Heart left ventricle (tissue), 16 donors: ENCODE measurements at regions of chr9 and their contacts with region 1.

Region 1: DNA sequence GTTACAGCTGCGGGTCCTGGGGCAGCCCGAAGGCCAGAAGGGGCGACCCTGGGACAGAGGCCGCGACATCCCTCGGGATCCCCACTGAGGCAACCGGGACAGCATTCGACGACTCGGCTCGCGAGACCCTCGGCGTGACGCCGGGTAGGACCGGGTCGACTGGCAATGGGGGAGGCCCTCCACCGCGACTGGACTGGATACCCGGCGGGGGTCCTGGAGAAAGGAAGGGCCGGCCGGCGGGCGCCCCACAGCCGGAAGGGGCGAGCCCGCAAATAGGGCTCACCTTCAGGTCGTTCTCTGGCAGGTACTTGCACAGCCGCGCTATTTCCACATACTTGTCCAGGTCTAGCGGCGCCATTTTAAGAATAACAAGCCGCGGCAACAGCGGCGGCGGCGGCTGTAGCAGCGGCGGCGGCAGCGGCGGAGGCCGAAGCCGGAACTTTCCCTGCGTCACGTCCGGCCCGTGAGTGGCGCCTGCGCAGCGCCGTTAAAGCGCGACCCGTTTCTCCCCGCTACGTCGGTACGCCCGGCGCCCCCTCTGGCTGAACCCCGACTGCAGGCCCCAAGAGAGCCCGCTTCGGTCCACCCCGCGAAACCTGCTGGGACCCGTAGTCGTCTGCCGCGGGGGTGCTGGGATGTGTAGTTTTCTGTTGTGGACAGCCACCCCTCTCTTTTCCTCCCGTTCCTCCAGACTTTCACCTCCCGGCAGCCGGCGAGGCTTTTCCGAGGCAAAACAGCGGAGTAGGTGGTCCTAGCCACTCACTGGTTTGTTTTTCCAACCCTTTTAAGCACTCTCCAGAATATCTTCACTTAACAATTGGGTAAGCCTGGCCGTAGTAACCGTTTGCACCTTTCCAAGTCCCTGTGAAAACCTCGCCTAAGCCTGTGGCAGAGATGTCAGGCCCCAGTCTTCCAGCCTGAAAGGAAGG is at the start of gene PPP6C:
- DNase-seq: peak; percentile 98 to 99 (median 98)
- ATAC-seq: peak; percentile 98 to 99 (median 99)
- H3K4me3 ChIP-seq: peak within 1 kb of the TSS; percentile 60 to 100 (median 99)
- H3K27ac ChIP-seq: peak within 1 kb of the TSS; percentile 71 to 97 (median 93)
- H3K4me1 ChIP-seq: peaks cover 0 to 49% (median 35%) of the 10 kb centered on the region in 12 donors
- H3K27me3 ChIP-seq: no peaks in the 10 kb centered on the region
- CTCF ChIP-seq: peak; percentile 53 to 86 (median 64)
- POLR2A ChIP-seq: peak; percentile 8 to 81
- total RNA-seq, gene PPP6C: 26.6 to 40.7 (median 37.7) TPM

Region 2: DNA sequence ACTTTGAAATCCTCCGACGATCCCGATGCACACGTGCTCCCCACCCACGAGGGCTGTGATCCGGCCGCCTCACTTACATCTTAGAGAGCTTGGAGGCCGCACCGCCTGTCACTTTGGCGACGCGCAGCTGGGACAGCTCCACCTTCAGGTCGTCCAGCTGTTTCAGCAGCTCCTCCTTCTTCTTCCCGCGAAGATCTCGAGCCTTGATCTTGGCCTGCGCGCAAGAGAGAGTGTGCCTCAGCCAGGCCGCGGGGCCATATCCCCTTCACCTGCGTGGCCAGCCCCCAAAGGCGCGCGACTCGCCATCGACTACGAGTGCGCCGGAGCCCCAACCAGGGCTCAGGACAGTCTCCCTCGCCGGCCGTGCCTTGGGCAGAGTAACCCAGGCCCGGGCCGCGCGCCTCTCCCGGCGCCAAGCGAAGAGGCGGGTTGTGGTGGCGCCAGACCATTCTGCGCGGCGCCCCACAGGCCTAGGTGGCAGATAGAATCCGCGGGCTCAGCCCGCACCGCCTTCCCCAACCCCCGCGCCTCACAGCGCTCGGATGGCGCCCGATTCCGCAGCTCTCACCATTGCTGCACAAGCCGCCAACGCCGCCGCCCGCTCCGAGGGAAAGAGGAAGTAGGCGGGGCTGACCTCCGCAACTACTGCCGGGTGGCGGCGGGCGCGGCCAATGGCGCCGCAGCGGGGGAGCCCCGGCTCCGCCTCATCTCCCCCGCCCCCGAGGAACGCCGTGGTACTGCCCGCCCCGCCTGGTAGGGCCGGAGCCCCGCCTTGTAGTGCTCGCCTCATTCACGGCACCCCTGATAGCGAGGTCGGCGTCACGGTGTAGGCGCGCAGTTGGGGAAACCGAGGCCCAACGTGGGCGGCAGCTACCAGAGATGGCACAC is 328.0 kb before region 1 on chr9 and contains the starts of genes ARPC5L and RPL35:
- intact Hi-C with region 1: loop called in 1 of 10 experiments (anchors 10 kb)
- DNase-seq: peak; percentile 96 to 98 (median 96)
- ATAC-seq: peak; percentile 95 to 97 (median 96)
- H3K4me3 ChIP-seq: peak within 1 kb of the TSS; percentile 71 to 98 (median 84)
- H3K27ac ChIP-seq: peak within 1 kb of the TSS; percentile 81 to 95 (median 92)
- H3K4me1 ChIP-seq: peaks cover 0 to 42% (median 32%) of the 10 kb centered on the region in 12 donors
- H3K27me3 ChIP-seq: no peaks in the 10 kb centered on the region
- CTCF ChIP-seq: peak in 7 of 12 donors; percentile 10 to 45 (median 23)
- POLR2A ChIP-seq: peak in 1 of 2 donors; percentile 93
- total RNA-seq, gene ARPC5L: 27.0 to 56.7 (median 38.3) TPM
- total RNA-seq, gene RPL35: 600 to 1,072 (median 736) TPM

Region 3: DNA sequence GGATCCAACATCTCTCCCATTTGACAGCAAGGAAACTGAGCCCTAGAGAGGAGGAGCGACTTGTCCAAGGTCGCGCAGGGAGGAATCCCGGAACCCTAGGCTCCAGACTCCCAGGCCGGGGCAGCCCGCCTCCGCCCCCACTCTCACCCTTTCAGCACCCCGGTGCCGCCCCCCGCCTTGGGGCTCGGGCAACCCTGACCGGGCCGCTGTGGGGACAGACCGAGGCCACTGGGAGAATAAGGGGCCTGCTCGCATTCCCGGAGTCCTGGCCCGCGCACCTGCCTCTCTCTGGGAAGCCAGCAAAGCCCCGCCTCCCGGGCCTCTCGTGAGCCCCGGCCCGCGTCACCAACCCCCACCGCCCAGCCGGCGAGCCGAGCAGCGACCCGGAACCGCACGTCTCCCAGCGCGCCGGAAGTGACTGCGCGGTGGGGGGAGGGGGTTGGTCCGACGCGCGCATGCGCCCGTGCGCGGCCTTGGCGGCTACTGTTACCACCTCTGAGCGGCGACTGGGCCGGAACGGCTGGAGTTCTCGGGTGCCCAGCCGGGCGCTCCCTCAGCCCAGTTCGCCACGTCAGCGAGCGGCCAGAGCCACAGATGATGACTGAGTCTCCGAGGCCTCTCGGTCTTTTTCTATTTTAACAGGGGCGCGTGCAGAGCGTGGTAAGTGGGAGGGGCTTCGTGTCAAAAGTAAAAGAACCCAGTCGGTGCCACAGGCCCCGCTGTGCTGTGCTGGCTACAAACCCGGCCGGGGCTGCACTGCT is 248.8 kb before region 1 on chr9 and contains the start of gene GOLGA1:
- intact Hi-C with region 1: loop called in 1 of 10 experiments (anchors 5 kb)
- DNase-seq: peak; percentile 95 to 98 (median 97)
- ATAC-seq: peak; percentile 97 to 99 (median 98)
- H3K4me3 ChIP-seq: peak within 1 kb of the TSS; percentile 60 to 99 (median 86)
- H3K27ac ChIP-seq: peak within 1 kb of the TSS; percentile 87 to 99 (median 96)
- H3K4me1 ChIP-seq: peaks cover 0 to 19% (median 15%) of the 10 kb centered on the region in 12 donors
- H3K27me3 ChIP-seq: no peaks in the 10 kb centered on the region
- CTCF ChIP-seq: peak in 1 of 12 donors; percentile 16
- POLR2A ChIP-seq: peak in 1 of 2 donors; percentile 86
- total RNA-seq, gene GOLGA1: 13.9 to 22.9 (median 19.4) TPM